Activated CD8-positive, alpha-beta T cell treated with anti-CD3 and anti-CD28 coated beads, Interleukin-2, amount 10 ng/mL, durations not matched to agents 7 days and 5 days (primary cell): ENCODE measurements at regions of chr2 and their contacts with region 1.

Region 1: DNA sequence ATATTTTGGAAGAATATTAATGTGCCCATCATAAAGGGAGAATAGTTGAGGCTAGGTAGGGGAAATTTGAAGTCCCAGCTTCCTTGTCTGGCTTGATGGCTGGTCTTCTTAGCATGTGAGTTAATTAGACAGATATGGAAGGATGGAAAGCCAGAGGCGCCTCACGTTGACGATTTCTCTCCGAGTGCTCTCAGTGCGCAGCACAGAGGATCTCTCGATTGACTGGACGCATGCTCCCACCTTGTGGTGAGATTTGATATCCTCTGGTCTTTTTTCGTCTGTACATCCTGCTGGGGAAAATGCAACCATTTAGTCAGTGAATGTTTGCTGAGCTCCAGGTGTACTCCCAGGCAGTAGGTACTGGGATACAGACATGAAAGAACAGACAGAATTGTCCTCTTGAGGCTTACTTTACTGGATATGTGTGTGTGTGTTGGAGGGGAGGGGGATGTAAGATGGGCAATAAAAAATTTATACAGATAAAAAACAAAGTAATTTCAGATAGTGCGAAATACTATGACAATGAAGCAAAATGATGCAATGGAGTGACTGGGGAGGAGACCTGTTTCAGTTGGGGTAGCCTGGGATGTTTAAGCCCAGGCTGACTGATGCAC is 66.9 kb upstream of the ZNG1B start:
- DNase-seq: peak; percentile 86
- ATAC-seq: peak; percentile 99
- H3K4me3 Mint-ChIP-seq: no peak overlapping the region
- H3K27ac Mint-ChIP-seq: no peak overlapping the region
- H3K4me1 Mint-ChIP-seq: peaks cover 35% of the 10 kb centered on the region
- H3K27me3 Mint-ChIP-seq: peaks cover 11% of the 10 kb centered on the region

Region 2: DNA sequence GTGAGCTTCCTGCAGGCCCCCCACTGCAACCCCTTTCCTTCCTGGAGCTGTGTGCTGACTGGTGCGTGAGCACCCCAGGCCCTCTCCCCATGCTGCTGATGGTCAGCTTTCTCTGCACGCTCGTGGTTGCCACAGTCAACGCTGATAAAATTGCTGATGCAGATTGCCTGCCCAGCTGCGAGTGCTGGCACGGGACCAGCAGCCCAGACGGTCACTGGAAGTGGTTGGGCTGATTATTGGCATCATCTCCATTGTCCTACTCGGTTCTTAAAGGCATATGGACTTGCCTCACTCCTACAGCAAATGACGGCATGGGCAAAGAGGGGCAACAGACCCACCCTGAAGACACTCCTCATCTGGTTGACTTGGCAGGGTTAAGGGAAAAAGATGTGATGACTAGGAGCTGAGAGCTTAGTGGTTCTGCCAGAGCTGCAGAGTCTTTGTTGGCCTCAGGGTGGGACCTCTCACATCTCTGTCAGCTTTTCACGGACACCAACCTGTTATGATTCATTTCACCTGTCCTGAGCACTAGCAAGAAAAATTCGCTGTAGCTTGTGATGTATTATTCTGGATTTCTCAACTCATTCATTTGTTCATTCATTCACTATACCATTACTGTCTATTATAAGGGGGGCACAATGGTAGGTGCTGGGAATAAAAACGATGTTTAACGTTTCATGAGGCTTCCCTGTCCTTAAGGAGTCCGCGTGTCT is 130.3 kb before region 1 on chr2:
- CTCF ChIA-PET with region 1: interaction called, 81 read pairs
- POLR2A ChIA-PET with region 1: no interaction called
- DNase-seq: no peak
- ATAC-seq: no peak
- H3K4me3 Mint-ChIP-seq: no peak overlapping the region
- H3K27ac Mint-ChIP-seq: no peak overlapping the region
- H3K4me1 Mint-ChIP-seq: peaks cover 17% of the 10 kb centered on the region
- H3K27me3 Mint-ChIP-seq: peaks cover 3% of the 10 kb centered on the region

Region 3: DNA sequence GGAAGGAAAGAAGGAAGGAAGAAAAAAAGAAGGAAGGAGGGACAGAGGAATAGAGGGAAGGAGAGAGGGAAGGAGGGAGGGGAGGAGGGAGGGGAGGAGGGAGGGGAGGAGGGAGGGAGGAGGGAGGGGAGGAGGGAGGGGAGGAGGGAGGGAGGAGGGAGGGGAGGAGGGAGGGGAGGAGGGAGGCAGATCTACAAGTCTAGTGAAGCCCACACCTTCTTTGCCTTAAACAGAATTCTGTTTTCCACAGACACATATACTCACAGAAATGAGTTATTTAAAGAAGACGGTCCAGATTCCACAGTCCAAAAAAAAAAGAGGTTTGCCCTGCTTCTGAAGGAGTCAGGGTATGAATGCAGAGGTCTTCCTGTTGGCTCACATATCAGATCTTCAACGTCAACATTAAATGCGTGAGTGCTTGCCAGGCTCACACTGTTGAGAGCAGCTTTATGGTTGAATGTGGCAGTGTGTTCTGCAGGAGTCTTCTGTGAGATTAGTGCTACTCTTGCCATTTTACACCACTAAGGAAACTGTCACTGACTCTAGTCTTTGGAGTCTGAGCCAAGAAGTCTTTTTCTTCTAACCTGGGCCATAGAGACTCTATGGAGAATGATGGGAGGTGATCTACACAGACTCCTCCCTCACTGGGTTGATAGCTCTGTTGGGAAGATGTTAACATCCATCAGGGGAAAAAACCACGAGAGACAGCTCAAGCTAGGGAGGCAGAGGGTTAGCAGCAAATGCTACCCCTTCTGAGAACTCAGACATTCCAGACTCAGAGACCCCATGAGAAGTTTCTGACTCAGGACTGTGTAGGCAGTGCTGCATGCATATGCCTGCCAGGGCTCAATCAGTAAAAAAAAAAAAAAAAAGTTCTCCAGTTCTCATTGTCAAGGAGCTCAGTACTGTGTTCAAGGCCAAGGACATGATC is 115.2 kb before region 1 on chr2:
- CTCF ChIA-PET with region 1: interaction called, 81 read pairs
- POLR2A ChIA-PET with region 1: no interaction called
- DNase-seq: no peak
- ATAC-seq: no peak
- H3K4me3 Mint-ChIP-seq: no peak overlapping the region
- H3K27ac Mint-ChIP-seq: no peak overlapping the region
- H3K4me1 Mint-ChIP-seq: peaks cover 81% of the 10 kb centered on the region
- H3K27me3 Mint-ChIP-seq: no peaks in the 10 kb centered on the region

Region 4: DNA sequence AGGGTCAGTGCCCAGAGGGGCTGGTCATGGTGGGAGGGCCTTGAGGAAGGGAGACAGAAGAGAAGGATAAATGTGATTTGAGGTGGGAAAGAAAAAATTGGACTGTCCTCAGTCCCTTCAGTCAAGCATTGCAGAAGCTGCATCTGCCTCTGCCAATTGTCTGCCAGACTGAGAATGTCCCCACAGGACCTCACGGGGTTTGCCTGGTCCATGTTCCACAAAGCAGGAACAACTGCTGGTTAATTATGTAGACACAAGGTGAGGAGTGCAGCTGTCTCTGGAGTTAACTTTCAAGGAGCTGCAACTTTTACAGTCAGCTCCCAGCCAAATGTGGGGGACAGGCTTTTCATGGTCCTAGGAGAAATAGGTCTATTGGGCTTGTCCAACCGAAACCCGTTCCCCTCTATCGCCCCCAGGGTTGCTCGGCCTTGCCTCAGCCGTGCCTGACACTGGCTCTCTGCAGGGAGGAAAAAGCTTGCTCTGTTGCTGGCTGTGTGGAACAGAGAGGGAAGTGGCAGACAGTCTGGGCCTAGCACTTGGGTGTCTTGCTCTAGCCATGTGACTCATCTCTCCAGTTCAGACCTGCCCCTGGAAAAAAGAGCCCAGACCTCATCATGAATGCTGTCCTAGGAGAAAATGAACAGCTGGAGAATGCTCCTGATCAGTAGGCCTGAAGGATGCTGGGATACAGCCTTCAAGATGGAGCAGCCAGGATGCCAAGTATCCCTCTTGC is 60.8 kb before region 1 on chr2:
- CTCF ChIA-PET with region 1: no interaction called
- POLR2A ChIA-PET with region 1: no interaction called
- DNase-seq: no peak
- ATAC-seq: no peak
- H3K4me3 Mint-ChIP-seq: no peak overlapping the region
- H3K27ac Mint-ChIP-seq: no peak overlapping the region
- H3K4me1 Mint-ChIP-seq: peaks cover 3% of the 10 kb centered on the region
- H3K27me3 Mint-ChIP-seq: peaks cover 42% of the 10 kb centered on the region

Region 5: GRCh38 chr2:113390124-113390849 is 19.7 kb after region 1 on chr2:
- CTCF ChIA-PET with region 1: interaction called, 13 read pairs
- POLR2A ChIA-PET with region 1: no interaction called
- DNase-seq: peak; percentile 73
- ATAC-seq: peak; percentile 90
- H3K4me3 Mint-ChIP-seq: peak overlapping the region; percentile 74
- H3K27ac Mint-ChIP-seq: peak overlapping the region; percentile 82
- H3K4me1 Mint-ChIP-seq: peaks cover 15% of the 10 kb centered on the region
- H3K27me3 Mint-ChIP-seq: peaks cover 20% of the 10 kb centered on the region